ENCODE measurements at regions of chr1 and their contacts with region 1.

Region 1: DNA sequence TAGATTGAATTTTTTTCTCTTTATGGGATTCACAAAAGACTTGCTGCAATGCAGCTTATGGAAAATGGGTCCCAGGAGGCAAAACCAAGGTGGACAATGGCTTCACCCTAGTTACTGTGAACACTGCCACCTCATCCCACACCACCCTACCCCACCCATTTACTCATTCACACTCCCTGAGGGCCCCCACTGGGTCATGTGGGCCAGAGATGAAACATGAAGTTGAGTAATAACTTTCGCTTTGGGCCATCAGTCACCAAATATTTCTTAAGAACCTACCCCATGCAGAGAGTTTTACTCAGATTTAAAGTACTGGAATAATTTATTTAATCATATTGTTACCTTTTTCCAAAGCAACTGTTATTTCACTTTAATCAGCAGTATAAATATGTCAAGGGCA is 191.8 kb downstream of the TPR start:
- DNase-seq: no peak
- ATAC-seq: peak; percentile 88
- H3K4me3 ChIP-seq: no peak overlapping the region
- H3K27ac ChIP-seq: no peak overlapping the region
- H3K4me1 ChIP-seq: no peaks in the 10 kb centered on the region
- H3K27me3 ChIP-seq: no peaks in the 10 kb centered on the region
- CTCF ChIP-seq: no peak
- EP300 ChIP-seq: no peak
- POLR2A ChIP-seq: no peak
- RAD21 ChIP-seq: no peak

Region 2: GRCh38 chr1:185694081-185694480 is 489.1 kb before region 1 on chr1:
- CTCF ChIA-PET with region 1: no interaction called
- POLR2A ChIA-PET with region 1: no interaction called
- RAD21 ChIA-PET with region 1: no interaction called
- SMC1A ChIA-PET with region 1: no interaction called
- in situ Hi-C with region 1: no loop called
- intact Hi-C with region 1: no loop called
- DNase-seq: peak; percentile 26
- ATAC-seq: peak; percentile 71
- H3K4me3 ChIP-seq: peak overlapping the region; percentile 31; the same call in 1 of the 2 replicates
- H3K27ac ChIP-seq: no peak overlapping the region
- H3K4me1 ChIP-seq: no peaks in the 10 kb centered on the region
- H3K27me3 ChIP-seq: no peaks in the 10 kb centered on the region; a peak in 1 of 4 replicates
- CTCF ChIP-seq: no peak
- EP300 ChIP-seq: no peak
- POLR2A ChIP-seq: no peak
- RAD21 ChIP-seq: no peak

Region 3: GRCh38 chr1:186078245-186078644 is 105.0 kb before region 1 on chr1:
- CTCF ChIA-PET with region 1: no interaction called
- POLR2A ChIA-PET with region 1: no interaction called
- RAD21 ChIA-PET with region 1: no interaction called
- SMC1A ChIA-PET with region 1: no interaction called
- in situ Hi-C with region 1: no loop called
- intact Hi-C with region 1: loop called (anchors 5 kb)
- DNase-seq: peak; percentile 28
- ATAC-seq: peak; percentile 95
- H3K4me3 ChIP-seq: no peak overlapping the region
- H3K27ac ChIP-seq: no peak overlapping the region
- H3K4me1 ChIP-seq: no peaks in the 10 kb centered on the region
- H3K27me3 ChIP-seq: peaks cover 0 to 1% of the 10 kb centered on the region in 2 experiments; a peak in 1 of 4 replicates
- CTCF ChIP-seq: no peak
- EP300 ChIP-seq: peak; percentile 69 to 85; a peak in 3 of 4 replicates
- POLR2A ChIP-seq: no peak
- RAD21 ChIP-seq: no peak